CD4-positive, alpha-beta memory T cell (primary cell): ENCODE measurements at regions of chr1 and their contacts with region 1.

Region 1: GRCh38 chr1:11262171-11263049 is at the start of gene MTOR:
- DNase-seq: peak; percentile 97 to 99 (median 99)
- H3K4me3 ChIP-seq: peak within 1 kb of the TSS; percentile 44 to 80
- H3K4me3 Mint-ChIP-seq: peak within 1 kb of the TSS; percentile 81 to 97 (median 91)
- H3K27ac ChIP-seq: peak within 1 kb of the TSS; percentile 91
- H3K27ac Mint-ChIP-seq: peak within 1 kb of the TSS; percentile 74 to 97 (median 93)
- H3K4me1 ChIP-seq: peaks cover 15% of the 10 kb centered on the region
- H3K4me1 Mint-ChIP-seq: peaks cover 13 to 30% (median 21%) of the 10 kb centered on the region in 4 donors
- H3K27me3 ChIP-seq: no peaks in the 10 kb centered on the region
- H3K27me3 Mint-ChIP-seq: no peaks in the 10 kb centered on the region
- total RNA-seq, gene MTOR: 41.4 to 46.8 TPM

Region 2: GRCh38 chr1:11012250-11013171 is 249.9 kb before region 1 on chr1 and contains the start of gene TARDBP:
- CTCF ChIA-PET with region 1: no interaction called
- POLR2A ChIA-PET with region 1: interaction called, 18 read pairs
- intact Hi-C with region 1: no loop called
- DNase-seq: peak; percentile 90 to 95 (median 92)
- H3K4me3 ChIP-seq: peak within 1 kb of the TSS; percentile 55 to 97
- H3K4me3 Mint-ChIP-seq: peak within 1 kb of the TSS; percentile 88 to 96 (median 89)
- H3K27ac ChIP-seq: peak within 1 kb of the TSS; percentile 98
- H3K27ac Mint-ChIP-seq: peak within 1 kb of the TSS; percentile 97 to 98 (median 97)
- H3K4me1 ChIP-seq: peaks cover 44% of the 10 kb centered on the region
- H3K4me1 Mint-ChIP-seq: peaks cover 16 to 41% (median 24%) of the 10 kb centered on the region in 4 donors
- H3K27me3 ChIP-seq: no peaks in the 10 kb centered on the region
- H3K27me3 Mint-ChIP-seq: no peaks in the 10 kb centered on the region
- total RNA-seq, gene TARDBP: 194 to 195 TPM

Region 3: DNA sequence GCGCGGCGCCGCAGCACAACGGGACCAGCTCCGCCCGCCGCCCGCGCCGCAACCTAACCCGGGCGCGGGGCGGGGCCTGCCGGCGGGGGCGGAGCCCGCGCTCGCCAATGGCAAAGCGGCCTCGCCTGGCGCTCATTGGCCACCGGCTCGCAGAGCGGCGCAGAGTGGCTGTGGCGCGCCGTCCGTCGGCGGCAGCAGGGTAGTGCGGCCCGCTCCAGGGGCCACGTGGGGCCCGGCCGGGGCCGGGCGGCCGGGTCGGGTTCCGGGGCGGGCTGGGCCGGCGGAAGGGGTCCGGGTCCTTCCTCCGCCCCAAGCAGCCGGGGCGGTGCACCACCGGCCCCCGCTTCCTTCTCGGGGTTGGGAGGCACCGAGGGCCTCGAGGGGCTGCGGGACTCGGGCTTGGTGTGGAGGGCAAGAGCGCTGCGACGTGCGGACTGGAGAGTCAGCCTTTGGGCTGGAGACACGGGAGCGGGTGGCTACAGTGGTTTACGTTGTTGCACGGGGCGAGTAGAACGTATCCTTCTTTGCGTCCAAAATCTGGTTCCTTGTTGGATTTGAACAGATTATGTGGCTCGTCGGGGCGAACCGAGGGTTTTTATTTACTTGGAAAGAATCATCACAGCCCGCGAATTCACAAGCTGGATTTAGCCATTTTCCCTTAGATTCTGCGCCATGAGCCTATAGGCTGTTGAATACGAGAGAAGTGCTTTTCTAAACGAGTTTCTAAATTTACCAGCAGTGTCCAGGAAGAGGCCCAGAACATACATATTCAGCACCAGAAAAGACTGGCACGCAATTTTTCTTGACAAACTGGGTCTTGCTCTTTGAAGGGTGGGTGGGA is 202.2 kb before region 1 on chr1 and contains the start of gene SRM:
- CTCF ChIA-PET with region 1: no interaction called
- POLR2A ChIA-PET with region 1: interaction called, 11 read pairs
- intact Hi-C with region 1: no loop called
- DNase-seq: peak; percentile 87 to 93 (median 90)
- H3K4me3 ChIP-seq: peak within 1 kb of the TSS; percentile 57 to 76
- H3K4me3 Mint-ChIP-seq: peak within 1 kb of the TSS; percentile 92 to 96 (median 94)
- H3K27ac ChIP-seq: peak within 1 kb of the TSS; percentile 65
- H3K27ac Mint-ChIP-seq: peak within 1 kb of the TSS; percentile 86 to 96 (median 93)
- H3K4me1 ChIP-seq: peaks cover 26% of the 10 kb centered on the region
- H3K4me1 Mint-ChIP-seq: peaks cover 15 to 42% (median 30%) of the 10 kb centered on the region in 4 donors
- H3K27me3 ChIP-seq: no peaks in the 10 kb centered on the region
- H3K27me3 Mint-ChIP-seq: no peaks in the 10 kb centered on the region
- total RNA-seq, gene SRM: 53.1 to 55.1 TPM

Region 4: DNA sequence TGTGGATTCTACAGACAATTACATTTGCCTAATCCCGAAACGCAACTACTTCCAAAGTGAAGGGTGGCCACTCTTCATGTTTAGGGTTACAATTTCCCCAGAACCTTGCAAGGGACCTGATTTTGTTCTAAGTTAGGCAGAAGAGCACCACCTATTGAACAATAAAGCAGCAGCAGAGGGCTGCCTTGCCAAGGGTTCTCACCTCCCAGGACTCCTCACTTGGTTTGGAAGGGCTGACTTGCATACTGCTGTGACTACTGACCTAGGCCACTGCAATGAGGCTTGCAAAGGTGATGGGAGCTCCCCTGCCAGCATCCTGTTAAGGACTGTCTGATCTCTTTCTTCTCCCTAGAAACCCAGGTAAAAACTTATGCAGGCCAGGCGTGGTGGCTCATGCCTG is 14.3 kb before region 1 on chr1:
- CTCF ChIA-PET with region 1: interaction called, 11 read pairs
- POLR2A ChIA-PET with region 1: interaction called, 21 read pairs
- intact Hi-C with region 1: no loop called
- DNase-seq: no peak
- H3K4me3 ChIP-seq: no peak overlapping the region
- H3K4me3 Mint-ChIP-seq: no peak overlapping the region
- H3K27ac ChIP-seq: no peak overlapping the region
- H3K27ac Mint-ChIP-seq: peak overlapping the region in 6 of 7 donors; percentile 50 to 85 (median 72)
- H3K4me1 ChIP-seq: peaks cover 38% of the 10 kb centered on the region
- H3K4me1 Mint-ChIP-seq: peaks cover 19 to 32% (median 23%) of the 10 kb centered on the region in 4 donors
- H3K27me3 ChIP-seq: no peaks in the 10 kb centered on the region
- H3K27me3 Mint-ChIP-seq: no peaks in the 10 kb centered on the region

Region 5: DNA sequence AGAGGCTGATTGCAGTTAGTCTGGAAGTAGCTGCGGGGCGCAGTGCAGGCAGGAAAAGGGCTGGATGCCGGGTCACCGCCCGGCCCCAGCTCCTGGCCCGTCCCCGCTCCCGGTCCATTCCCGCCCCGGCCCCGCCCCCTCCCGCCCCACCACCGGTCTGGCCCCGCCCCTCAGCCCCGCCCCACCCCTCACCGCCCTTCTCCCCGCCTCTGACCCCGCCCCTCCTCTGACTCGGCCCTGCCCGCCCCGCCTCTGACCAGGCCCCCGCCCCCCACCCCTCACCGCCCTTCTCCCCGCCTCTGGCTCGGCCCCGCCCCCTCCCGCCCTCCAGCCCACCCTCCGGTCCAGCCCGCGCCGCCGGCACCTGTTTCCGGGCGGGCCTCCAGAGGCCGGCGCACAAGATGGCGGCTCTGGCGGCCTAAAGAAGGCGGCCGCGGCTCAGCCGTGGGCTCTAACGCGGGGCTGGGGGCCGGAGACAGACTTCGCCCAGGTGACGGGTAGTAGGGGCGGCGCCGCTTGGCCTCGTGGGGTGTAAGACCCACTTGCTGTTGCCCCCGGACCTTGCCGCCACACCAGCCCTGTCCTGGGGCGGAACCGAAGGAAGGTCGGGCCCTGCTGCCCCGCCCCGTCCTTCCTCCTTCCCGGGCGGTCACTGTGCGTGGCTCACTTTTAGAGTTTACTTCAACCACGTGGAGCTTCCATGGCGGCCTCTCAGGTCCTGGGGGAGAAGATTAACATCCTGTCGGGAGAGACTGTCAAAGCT is 10.6 kb after region 1 on chr1 and contains the start of gene UBIAD1:
- CTCF ChIA-PET with region 1: interaction called, 5 read pairs
- POLR2A ChIA-PET with region 1: interaction called, 53 read pairs
- intact Hi-C with region 1: loop called (anchors 1 kb)
- DNase-seq: peak; percentile 75 to 83 (median 80)
- H3K4me3 ChIP-seq: peak within 1 kb of the TSS; percentile 90 to 99
- H3K4me3 Mint-ChIP-seq: peak within 1 kb of the TSS; percentile 91 to 98 (median 95)
- H3K27ac ChIP-seq: peak within 1 kb of the TSS; percentile 88
- H3K27ac Mint-ChIP-seq: peak within 1 kb of the TSS; percentile 86 to 97 (median 95)
- H3K4me1 ChIP-seq: peaks cover 41% of the 10 kb centered on the region
- H3K4me1 Mint-ChIP-seq: peaks cover 21 to 40% (median 30%) of the 10 kb centered on the region in 4 donors
- H3K27me3 ChIP-seq: no peaks in the 10 kb centered on the region
- H3K27me3 Mint-ChIP-seq: no peaks in the 10 kb centered on the region
- total RNA-seq, gene UBIAD1: 30.3 to 33.0 TPM

Region 6: DNA sequence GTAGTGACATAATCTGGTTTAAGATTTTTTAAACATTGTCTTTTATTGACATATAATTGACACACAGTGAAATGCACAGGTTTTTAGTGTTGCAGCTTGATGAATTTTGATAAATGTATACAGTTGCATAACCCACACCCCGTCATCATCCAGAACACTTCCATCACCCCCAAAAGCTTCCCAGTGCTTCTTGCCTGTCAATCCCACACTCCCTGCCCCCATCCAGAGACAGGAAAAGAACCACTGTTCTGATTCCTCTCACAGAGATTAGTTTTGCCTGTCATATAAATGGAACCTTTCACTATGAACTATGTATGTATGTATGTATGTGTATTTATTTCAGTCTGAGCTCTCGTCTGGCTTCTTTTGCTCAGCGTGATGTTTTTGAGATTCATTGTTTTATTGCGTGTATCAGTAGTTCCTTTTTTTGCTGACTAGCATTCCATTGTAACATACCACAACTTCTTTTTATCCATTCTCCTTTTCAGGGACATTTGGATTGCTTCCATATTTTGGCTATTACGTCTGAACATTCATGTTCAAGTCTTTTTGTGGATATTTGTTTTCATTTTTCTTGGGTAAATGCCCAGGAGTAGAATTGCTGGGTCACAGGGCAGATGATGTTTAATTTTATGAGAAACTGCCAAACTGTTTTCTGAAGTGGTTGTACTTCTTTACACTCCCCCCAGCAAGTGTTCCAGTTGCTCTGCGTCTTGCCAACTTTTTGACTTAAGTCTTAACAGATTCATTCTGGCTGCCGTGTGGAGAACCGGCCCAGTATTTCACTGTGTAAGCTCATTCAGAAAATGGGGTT is 19.3 kb after region 1 on chr1:
- CTCF ChIA-PET with region 1: interaction called, 4 read pairs
- POLR2A ChIA-PET with region 1: interaction called, 29 read pairs
- intact Hi-C with region 1: no loop called
- DNase-seq: no peak
- H3K4me3 ChIP-seq: peak overlapping the region in 1 of 2 donors; percentile 7
- H3K4me3 Mint-ChIP-seq: peak overlapping the region in 7 of 8 donors; percentile 18 to 74 (median 59)
- H3K27ac ChIP-seq: peak overlapping the region; percentile 41
- H3K27ac Mint-ChIP-seq: peak overlapping the region; percentile 43 to 98 (median 81)
- H3K4me1 ChIP-seq: peaks cover 83% of the 10 kb centered on the region
- H3K4me1 Mint-ChIP-seq: peaks cover 54 to 85% (median 74%) of the 10 kb centered on the region in 4 donors
- H3K27me3 ChIP-seq: no peaks in the 10 kb centered on the region
- H3K27me3 Mint-ChIP-seq: no peaks in the 10 kb centered on the region

Region 7: DNA sequence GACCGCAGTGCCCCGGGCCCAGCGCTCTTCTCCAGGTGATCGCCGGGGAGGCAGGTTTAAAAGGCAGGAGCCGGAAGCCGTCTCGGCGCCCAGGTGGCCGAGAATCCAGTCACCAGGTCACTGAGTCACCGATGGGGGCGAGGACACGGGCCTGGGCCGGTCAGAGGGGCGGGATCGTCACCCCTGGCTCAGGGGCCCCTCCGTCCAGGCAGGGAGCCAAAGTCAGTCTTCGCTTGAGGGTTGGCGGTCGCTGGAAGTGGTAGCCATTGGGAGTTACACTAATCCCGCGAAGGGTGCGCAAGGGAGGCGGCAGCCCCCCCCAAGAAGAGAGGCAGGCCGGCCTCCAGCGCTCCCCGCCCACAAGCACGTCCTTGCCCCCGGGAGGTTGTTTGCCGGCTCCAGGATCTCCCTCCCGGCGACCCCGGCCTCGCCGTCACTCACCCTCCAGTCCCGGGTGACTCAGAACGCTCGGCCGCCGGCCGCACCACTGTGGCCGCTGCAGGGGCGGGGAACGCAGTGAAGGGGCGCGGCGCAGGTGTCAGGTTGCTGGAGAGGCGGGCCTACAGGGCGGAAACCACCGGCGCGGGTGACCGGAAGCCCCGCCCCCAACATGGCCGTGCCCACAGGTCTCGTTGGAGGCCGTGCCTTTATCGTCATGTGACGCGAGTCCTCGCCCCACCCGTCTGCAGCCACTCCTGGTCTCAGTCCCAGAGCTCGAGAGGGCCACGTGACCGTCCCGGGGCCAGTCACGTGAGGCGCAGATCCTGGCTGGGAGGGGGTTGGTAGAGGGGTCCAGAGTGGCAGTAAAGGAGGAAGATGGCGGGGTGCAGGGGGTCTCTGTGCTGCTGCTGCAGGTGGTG is 543.3 kb after region 1 on chr1 and contains the starts of genes CLCN6 and MTHFR:
- CTCF ChIA-PET with region 1: no interaction called
- POLR2A ChIA-PET with region 1: interaction called, 5 read pairs
- intact Hi-C with region 1: loop called (anchors 5 kb)
- DNase-seq: peak; percentile 97 to 99 (median 98)
- H3K4me3 ChIP-seq: peak within 1 kb of the TSS; percentile 37 to 86
- H3K4me3 Mint-ChIP-seq: peak within 1 kb of the TSS; percentile 96 to 100 (median 98)
- H3K27ac ChIP-seq: peak within 1 kb of the TSS; percentile 73
- H3K27ac Mint-ChIP-seq: peak within 1 kb of the TSS; percentile 92 to 100 (median 99)
- H3K4me1 ChIP-seq: peaks cover 55% of the 10 kb centered on the region
- H3K4me1 Mint-ChIP-seq: peaks cover 35 to 76% (median 58%) of the 10 kb centered on the region in 4 donors
- H3K27me3 ChIP-seq: no peaks in the 10 kb centered on the region
- H3K27me3 Mint-ChIP-seq: no peaks in the 10 kb centered on the region
- total RNA-seq, gene CLCN6: 20.8 to 20.9 TPM
- total RNA-seq, gene MTHFR: 52.7 to 54.2 TPM